Head of caudate nucleus (tissue), 42 donors: ENCODE measurements at regions of chr15 and their contacts with region 1.

Region 1: GRCh38 chr15:29925227-29926082 is 103.2 kb upstream of the TJP1 start:
- DNase-seq: peak in 35 of 42 donors; percentile 31 to 86 (median 64)

Region 2: GRCh38 chr15:29685155-29686078 is 240.0 kb before region 1 on chr15:
- intact Hi-C with region 1: loop called (anchors 10 kb)
- DNase-seq: peak in 11 of 42 donors; percentile 7 to 42 (median 24)

Region 3: GRCh38 chr15:29747837-29748417 is 177.5 kb before region 1 on chr15:
- intact Hi-C with region 1: loop called (anchors 10 kb)
- DNase-seq: no peak

Region 4: DNA sequence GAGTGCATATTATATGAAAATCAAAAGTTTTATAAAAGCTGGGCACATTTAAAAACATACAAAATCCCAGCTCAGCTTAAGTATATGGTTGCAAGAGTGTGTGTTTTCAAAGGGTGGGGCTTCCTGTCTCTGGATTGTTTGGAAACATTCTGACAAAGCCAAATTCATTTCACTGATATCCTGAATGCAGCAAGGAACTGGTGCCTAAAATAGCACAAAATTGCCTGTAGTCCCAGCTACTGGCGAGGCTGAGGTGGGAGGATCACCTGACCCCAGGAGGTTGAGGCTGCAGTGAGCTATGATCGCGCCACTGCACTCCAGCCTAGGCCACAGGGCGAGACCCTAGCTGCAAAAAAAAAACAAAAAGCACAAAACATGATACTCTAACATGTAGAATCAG is 90.2 kb before region 1 on chr15:
- intact Hi-C with region 1: loop called (anchors 10 kb)
- DNase-seq: peak in 2 of 42 donors; percentile 43